A549 (cell line): ENCODE measurements at regions of chr3 and their contacts with region 1.

Region 1: GRCh38 chr3:38651154-38651789 is 1.8 kb upstream of the SCN5A start:
- DNase-seq: peak; percentile 61 to 68
- ATAC-seq: peak; percentile 38 to 74; a peak in 5 of 6 replicates
- H3K4me3 ChIP-seq: no peak overlapping the region
- H3K27ac ChIP-seq: no peak overlapping the region
- H3K4me1 ChIP-seq: no peaks in the 10 kb centered on the region
- CTCF ChIP-seq: peak; percentile 76
- EP300 ChIP-seq: no peak
- POLR2A ChIP-seq: no peak
- RAD21 ChIP-seq: peak; percentile 60 to 68

Region 2: DNA sequence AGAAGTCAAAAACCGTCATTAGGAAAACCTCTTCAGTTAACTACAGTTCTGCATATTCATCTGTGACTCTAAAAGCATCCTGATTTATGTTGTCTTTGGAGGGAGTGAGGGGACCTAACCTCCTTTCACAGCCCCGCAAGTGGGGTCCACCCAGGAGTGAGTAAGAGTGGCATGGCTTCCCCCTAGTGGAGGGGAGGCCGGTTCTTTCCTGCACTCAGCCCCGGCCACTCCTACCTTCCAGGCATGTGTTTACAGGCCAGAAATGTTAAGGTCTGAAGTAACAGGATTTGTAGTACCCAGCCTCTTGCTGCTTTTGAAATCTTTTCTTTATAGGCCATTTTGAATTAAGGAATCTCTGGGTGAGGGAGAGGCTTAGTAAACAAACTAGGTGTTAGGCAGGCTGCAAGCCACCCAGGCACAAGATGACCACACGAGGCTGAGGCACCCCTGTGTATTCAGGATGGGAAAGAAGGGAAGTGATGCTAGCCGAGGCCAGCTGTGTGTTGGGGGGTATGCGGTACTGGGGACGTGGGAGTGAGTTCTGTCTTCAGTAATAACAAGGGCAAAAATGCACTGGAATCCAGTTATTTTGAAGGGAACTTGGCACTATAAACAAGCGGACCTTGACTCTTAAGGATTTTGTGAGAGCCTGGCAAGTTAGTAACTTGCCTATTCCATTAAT is 739.1 kb before region 1 on chr3:
- CTCF ChIA-PET with region 1: no interaction called
- POLR2A ChIA-PET with region 1: no interaction called
- DNase-seq: no peak
- ATAC-seq: peak in 1 of 2 experiments; percentile 76; a peak in 3 of 6 replicates
- H3K4me3 ChIP-seq: no peak overlapping the region
- H3K27ac ChIP-seq: no peak overlapping the region
- H3K4me1 ChIP-seq: no peaks in the 10 kb centered on the region
- CTCF ChIP-seq: no peak
- EP300 ChIP-seq: no peak
- POLR2A ChIP-seq: no peak
- RAD21 ChIP-seq: no peak

Region 3: DNA sequence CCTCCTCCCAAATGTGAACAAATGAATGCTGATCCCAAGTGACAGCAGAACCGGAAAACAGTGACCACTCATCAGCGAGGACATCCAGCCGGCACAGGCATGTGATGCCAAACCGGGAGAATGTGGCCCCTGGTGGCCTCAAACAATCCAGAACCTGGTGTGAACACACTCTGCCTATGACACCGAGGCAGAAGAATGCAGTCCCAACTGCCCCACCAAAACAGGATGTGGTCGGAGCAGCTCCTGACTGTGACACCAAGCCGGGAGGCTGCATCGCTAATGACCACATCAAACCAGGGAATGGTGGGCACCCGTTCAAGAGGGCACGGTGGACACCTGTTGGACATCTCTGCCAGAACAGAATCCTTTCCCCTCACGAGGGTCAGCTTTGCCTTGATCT is 17.2 kb before region 1 on chr3:
- CTCF ChIA-PET with region 1: interaction called, 18 read pairs
- POLR2A ChIA-PET with region 1: no interaction called
- DNase-seq: no peak
- ATAC-seq: no peak
- H3K4me3 ChIP-seq: no peak overlapping the region
- H3K27ac ChIP-seq: no peak overlapping the region
- H3K4me1 ChIP-seq: no peaks in the 10 kb centered on the region
- CTCF ChIP-seq: no peak
- EP300 ChIP-seq: no peak
- POLR2A ChIP-seq: no peak
- RAD21 ChIP-seq: no peak

Region 4: GRCh38 chr3:38640661-38641452 is 10.4 kb before region 1 on chr3:
- CTCF ChIA-PET with region 1: interaction called, 34 read pairs
- POLR2A ChIA-PET with region 1: no interaction called
- DNase-seq: no peak
- ATAC-seq: no peak
- H3K4me3 ChIP-seq: no peak overlapping the region
- H3K27ac ChIP-seq: no peak overlapping the region
- H3K4me1 ChIP-seq: no peaks in the 10 kb centered on the region
- CTCF ChIP-seq: no peak
- EP300 ChIP-seq: no peak
- POLR2A ChIP-seq: no peak
- RAD21 ChIP-seq: no peak

Region 5: DNA sequence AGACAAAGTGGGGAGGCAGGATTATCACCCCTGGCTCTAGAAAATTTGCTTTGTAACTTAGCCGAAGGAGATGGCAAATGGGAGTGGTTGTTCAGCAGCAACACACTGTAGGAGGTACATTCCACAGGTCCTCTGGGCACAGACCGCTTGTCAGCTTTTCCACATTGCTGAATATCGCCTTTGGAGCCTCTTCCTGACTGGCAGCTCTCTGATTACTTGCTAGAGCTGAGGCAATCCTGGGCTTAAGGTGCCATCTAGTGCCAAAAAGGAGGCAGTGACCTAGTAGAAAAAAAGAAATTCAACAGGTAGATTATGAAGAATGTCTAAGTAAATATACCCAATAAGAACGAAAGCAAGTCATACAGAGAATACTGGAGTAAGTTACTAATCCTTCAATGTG is 11.3 kb after region 1 on chr3:
- CTCF ChIA-PET with region 1: interaction called, 34 read pairs
- POLR2A ChIA-PET with region 1: no interaction called
- DNase-seq: peak in 1 of 2 experiments; percentile 64
- ATAC-seq: peak in 1 of 2 experiments; percentile 72; a peak in 3 of 6 replicates
- H3K4me3 ChIP-seq: no peak overlapping the region
- H3K27ac ChIP-seq: no peak overlapping the region
- H3K4me1 ChIP-seq: no peaks in the 10 kb centered on the region
- CTCF ChIP-seq: peak; percentile 16; the same call in 1 of the 3 replicates
- EP300 ChIP-seq: no peak
- POLR2A ChIP-seq: no peak
- RAD21 ChIP-seq: peak; percentile 41 to 71; a peak in 4 of 5 replicates

Region 6: GRCh38 chr3:38843898-38844297 is 192.6 kb after region 1 on chr3:
- CTCF ChIA-PET with region 1: interaction called, 52 read pairs
- POLR2A ChIA-PET with region 1: no interaction called
- DNase-seq: peak in 1 of 2 experiments; percentile 46
- ATAC-seq: peak; percentile 93 to 94
- H3K4me3 ChIP-seq: no peak overlapping the region
- H3K27ac ChIP-seq: no peak overlapping the region
- H3K4me1 ChIP-seq: no peaks in the 10 kb centered on the region
- CTCF ChIP-seq: peak; percentile 53
- EP300 ChIP-seq: no peak
- POLR2A ChIP-seq: no peak
- RAD21 ChIP-seq: peak; percentile 72 to 80